Heart left ventricle (tissue), 16 donors: ENCODE measurements at regions of chr7 and their contacts with region 1.

Region 1: GRCh38 chr7:64223366-64223765 is 4.9 kb upstream of the ZNF679 start:
- DNase-seq: no peak
- ATAC-seq: no peak
- H3K4me3 ChIP-seq: no peak overlapping the region
- H3K27ac ChIP-seq: no peak overlapping the region
- H3K4me1 ChIP-seq: no peaks in the 10 kb centered on the region
- H3K27me3 ChIP-seq: no peaks in the 10 kb centered on the region
- CTCF ChIP-seq: no peak
- POLR2A ChIP-seq: no peak

Region 2: DNA sequence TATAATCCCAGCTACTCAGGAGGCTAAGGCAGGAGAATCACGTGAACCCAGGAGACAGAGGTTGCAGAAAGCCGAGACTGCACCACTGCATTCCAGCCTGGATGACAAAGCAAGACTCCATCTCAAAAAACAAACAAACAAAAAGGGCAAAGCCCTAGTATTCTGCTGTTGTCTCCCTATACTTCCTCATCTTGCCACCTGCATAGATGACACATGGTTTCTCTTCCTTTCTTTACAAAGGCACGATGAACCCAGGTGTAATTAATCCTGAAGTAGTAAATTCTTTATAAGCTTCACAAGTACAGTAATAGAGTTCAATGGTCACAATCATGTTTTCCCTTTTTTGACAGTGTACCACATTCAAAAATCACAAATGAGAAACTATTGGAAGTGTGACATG is 188.0 kb before region 1 on chr7:
- intact Hi-C with region 1: no loop called
- DNase-seq: no peak
- ATAC-seq: no peak
- H3K4me3 ChIP-seq: no peak overlapping the region
- H3K27ac ChIP-seq: no peak overlapping the region
- H3K4me1 ChIP-seq: no peaks in the 10 kb centered on the region
- H3K27me3 ChIP-seq: peaks cover 0 to 13% (median 0%) of the 10 kb centered on the region in 9 donors
- CTCF ChIP-seq: no peak
- POLR2A ChIP-seq: no peak

Region 3: DNA sequence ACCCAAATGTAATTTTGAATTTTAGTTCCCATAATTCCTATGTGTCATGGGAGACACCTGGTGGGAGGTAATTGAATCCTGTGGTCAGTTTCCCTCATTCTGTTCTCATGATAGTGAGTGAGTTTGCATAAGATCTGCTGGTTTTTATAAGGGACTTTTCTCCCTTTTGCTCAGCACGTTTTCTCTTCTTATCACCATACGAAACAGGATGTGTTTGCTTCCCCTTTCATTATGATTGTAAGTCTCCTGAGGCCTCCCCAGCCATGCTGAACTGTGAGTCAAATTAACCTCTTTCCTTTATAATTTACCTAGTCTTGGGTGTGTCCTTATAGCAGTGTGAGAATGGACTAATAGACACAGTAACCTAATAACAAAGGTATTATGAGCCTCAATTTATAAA is 54.3 kb after region 1 on chr7:
- intact Hi-C with region 1: loop called in 1 of 10 experiments (anchors 10 kb)
- DNase-seq: no peak
- ATAC-seq: no peak
- H3K4me3 ChIP-seq: no peak overlapping the region
- H3K27ac ChIP-seq: no peak overlapping the region
- H3K4me1 ChIP-seq: no peaks in the 10 kb centered on the region
- H3K27me3 ChIP-seq: no peaks in the 10 kb centered on the region
- CTCF ChIP-seq: no peak
- POLR2A ChIP-seq: no peak